ENCODE measurements at regions of chr6 and their contacts with region 1.

Region 1: DNA sequence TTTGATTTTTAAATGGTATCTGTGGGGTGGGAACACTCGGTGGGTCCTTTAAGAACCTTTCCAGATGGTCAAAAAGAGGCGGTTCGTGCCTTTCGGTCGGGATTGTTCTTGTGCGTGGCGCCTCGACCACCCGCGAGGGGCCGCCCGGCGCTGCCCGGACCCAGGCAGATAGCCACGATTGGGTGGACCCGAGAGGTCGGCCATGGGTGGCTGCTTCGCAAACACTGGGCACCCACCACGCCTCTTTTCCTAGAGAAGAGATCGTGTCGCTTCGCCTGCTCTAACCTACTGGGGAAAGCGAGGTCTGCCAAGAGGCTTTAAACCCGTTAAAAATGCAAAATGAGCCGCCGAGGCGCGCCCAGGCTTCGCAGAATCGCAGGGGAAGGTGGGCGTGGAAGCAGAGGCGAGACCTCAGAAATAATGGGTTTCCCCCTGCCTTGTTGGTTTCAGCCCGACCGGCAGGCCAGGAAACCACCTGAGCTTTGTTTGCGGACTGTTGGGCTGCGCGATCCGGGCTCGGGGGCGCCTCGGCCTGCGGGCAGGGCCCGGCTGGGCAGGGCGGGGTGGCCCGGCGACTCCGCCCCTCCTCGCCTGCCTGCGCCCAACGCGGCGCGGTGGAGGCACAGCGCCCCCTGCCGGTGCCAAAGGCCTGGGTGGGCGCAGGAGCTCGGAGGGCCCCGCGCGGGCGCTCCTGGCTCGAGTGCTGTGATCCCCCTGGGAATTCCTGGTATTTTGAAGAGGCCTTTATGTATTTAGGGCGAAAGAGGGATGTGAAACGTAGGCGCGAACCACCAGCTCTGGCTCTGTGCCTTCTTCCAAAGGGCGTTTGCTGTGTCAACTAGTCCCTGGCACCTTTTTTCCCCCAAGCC is 1.6 kb downstream of the MARCKS start:
- DNase-seq: peak; percentile 76 to 84
- ATAC-seq: peak; percentile 73 to 86
- H3K4me3 ChIP-seq: peak overlapping the region; percentile 98
- H3K27ac ChIP-seq: peak overlapping the region; percentile 95 to 99
- H3K4me1 ChIP-seq: peaks cover 16% of the 10 kb centered on the region; the same call in 2 of the 3 replicates
- CTCF ChIP-seq: peak; percentile 85
- EP300 ChIP-seq: no peak
- POLR2A ChIP-seq: peak; percentile 33
- RAD21 ChIP-seq: peak; percentile 72 to 96

Region 2: DNA sequence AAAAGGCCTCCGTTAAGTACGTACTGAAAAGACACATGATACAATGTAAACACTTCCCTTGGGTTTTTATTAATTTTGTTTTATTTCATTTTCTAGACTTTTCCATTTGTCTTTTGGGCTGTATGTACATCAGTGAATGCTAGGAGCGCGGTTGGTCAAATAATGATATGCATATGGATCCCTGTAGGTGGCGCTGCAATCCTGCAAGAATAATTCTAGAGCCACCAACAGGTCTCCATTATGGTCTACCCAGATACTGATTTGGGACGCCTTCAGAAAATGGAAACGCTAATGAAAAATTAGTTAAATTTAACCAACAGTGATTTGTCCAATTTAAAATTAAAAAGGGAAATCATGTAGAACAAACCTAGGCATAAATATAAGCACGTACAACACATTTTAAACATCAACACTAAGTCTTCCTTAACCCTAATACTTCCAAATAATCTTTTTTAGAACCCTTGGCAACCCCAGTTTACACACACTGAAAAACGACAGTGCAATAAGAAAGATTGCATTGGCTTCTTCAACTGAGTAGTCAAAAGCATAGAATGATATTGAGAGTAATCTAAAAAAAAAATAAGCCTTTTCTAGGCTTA is 1078.1 kb before region 1 on chr6:
- CTCF ChIA-PET with region 1: interaction called, 10 read pairs
- POLR2A ChIA-PET with region 1: no interaction called
- DNase-seq: peak; percentile 37 to 71
- ATAC-seq: peak; percentile 50 to 90; a peak in 3 of 6 replicates
- H3K4me3 ChIP-seq: no peak overlapping the region
- H3K27ac ChIP-seq: no peak overlapping the region
- H3K4me1 ChIP-seq: no peaks in the 10 kb centered on the region
- CTCF ChIP-seq: peak; percentile 63
- EP300 ChIP-seq: no peak
- POLR2A ChIP-seq: no peak
- RAD21 ChIP-seq: peak; percentile 79 to 83

Region 3: DNA sequence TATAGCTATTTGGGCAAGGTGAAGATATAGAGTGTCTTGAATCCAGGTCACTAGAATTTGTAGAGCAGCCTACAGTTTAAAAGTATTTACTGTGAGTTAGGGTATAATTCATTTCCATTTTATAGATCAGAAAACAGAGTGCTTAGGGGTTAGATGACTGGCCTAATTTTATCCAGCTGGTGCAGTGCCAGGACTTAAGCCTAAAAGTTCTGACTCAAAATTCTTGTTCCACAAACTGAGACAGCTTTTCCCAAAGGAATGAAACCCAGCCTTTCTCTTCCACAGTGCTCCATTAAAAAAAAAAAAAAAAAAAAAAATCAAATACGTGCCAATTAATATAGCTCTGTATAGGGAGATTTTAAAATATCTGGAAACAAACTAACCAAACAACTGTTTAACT is 442.5 kb before region 1 on chr6:
- CTCF ChIA-PET with region 1: interaction called, 10 read pairs
- POLR2A ChIA-PET with region 1: interaction called, 3 read pairs
- DNase-seq: no peak
- ATAC-seq: no peak
- H3K4me3 ChIP-seq: no peak overlapping the region
- H3K27ac ChIP-seq: no peak overlapping the region
- H3K4me1 ChIP-seq: peaks cover 14% of the 10 kb centered on the region
- CTCF ChIP-seq: no peak
- EP300 ChIP-seq: no peak
- POLR2A ChIP-seq: no peak
- RAD21 ChIP-seq: no peak

Region 4: DNA sequence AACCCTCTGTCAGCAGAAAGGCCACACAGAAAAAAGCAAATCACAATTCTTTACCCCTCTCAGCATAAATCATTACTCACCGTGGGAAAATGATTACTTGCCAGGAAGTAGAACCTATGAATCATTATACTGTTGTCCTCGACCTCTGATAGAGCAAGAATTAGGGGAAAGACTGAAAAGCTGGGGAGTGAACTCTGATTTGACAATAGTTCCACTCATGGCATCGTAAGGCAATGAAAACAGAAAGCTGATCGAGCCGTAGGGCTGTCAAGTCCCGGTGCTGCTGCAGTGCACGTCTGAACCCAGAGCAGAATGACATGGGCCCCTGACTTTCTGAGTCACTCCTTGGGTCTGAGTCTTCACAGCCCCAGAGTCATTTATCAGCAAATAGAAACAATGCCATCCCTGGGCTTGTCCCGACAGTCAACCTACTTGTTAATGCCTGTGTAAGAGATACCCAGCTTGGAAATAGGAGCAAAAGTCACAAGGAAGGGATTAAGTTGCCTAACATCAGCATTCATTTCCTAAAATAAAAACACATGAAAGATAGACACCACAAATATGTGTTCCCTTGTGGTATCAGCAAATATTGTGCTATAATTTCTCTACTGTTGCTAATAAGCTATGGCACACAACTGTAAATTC is 226.4 kb before region 1 on chr6:
- CTCF ChIA-PET with region 1: interaction called, 7 read pairs
- POLR2A ChIA-PET with region 1: interaction called, 13 read pairs
- DNase-seq: peak; percentile 41 to 77
- ATAC-seq: peak; percentile 90 to 94
- H3K4me3 ChIP-seq: peak overlapping the region; percentile 14; the same call in 2 of the 3 replicates
- H3K27ac ChIP-seq: peak overlapping the region; percentile 69 to 87
- H3K4me1 ChIP-seq: peaks cover 68% of the 10 kb centered on the region
- CTCF ChIP-seq: no peak
- EP300 ChIP-seq: 0 out of 5 replicates have a peak, but pooled peaks of 1 of the 2 experiments have one; percentile 30
- POLR2A ChIP-seq: no peak
- RAD21 ChIP-seq: 0 out of 5 replicates have a peak, but pooled peaks have one; percentile 8 to 16

Region 5: DNA sequence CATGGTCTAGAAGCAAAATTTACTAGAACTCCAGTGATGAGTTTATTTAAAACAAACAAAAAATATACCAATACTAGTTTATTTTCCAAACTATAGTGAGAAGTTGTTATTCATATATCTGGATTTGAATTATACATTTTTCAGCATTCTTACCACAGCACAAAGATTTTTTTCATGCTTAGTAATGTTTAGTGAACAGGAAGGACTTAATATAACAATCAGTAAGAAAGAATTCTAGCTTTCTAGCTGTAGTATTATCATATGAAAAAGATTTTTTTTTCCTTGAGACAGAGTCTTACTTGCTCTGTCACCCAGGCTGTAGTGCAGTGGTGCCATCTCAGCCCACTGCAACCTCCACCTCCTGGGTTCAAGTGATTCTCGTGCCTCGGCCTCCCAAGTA is 12.2 kb after region 1 on chr6:
- CTCF ChIA-PET with region 1: interaction called, 10 read pairs
- POLR2A ChIA-PET with region 1: no interaction called
- DNase-seq: no peak
- ATAC-seq: no peak
- H3K4me3 ChIP-seq: no peak overlapping the region
- H3K27ac ChIP-seq: no peak overlapping the region
- H3K4me1 ChIP-seq: peaks cover 17% of the 10 kb centered on the region; the same call in 2 of the 3 replicates
- CTCF ChIP-seq: no peak
- EP300 ChIP-seq: no peak
- POLR2A ChIP-seq: no peak
- RAD21 ChIP-seq: no peak

Measured in A549 (cell line).